ENCODE measurements at regions of chr7 and their contacts with region 1.

Region 1: DNA sequence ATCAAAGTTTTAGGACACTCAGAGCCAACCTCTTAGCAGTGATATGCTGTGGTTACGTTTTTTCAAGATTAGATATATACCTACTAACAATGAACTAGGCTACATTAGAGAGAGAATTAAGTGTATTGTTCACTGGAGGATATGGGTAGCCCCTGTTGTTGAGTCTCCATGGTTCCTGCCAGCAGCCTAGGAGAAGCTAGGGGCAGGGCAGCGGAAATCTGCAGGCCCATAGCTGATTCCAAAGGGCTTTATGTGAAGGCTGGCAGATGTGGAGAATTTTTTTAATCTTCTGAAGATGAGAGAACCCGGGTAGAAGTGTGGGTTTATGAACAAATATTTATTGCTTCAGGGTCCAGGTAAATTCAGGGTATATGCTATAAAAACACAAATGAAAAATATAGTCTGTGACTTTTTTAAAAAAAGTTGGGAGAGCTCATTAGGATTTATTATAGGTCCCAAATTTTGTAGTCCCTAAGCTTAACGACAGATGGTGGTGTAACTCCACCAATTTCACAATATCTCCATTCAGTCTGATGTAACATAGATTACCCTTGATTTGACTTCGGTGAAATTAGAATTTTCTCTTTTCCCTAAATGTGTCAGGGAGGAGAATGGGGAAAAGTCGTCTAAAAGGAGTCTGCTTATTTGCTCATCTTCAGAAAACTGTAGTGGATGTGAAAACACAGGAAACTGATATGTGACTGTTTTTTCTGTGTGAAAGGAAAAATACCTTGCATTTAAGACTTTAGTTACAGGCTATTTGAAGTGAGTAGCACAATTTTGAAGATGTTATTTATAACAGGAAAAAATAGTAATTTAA is 163.0 kb upstream of the PPP1R3A start:
- DNase-seq: peak; percentile 45
- H3K4me3 Mint-ChIP-seq: no peak overlapping the region
- H3K27ac Mint-ChIP-seq: no peak overlapping the region
- H3K4me1 Mint-ChIP-seq: peaks cover 6% of the 10 kb centered on the region
- H3K27me3 Mint-ChIP-seq: peaks cover 95% of the 10 kb centered on the region
- CTCF ChIP-seq: peak; percentile 62

Region 2: GRCh38 chr7:113752289-113752688 is 329.5 kb before region 1 on chr7:
- CTCF ChIA-PET with region 1: no interaction called
- POLR2A ChIA-PET with region 1: no interaction called
- intact Hi-C with region 1: no loop called
- DNase-seq: no peak
- H3K4me3 Mint-ChIP-seq: no peak overlapping the region
- H3K27ac Mint-ChIP-seq: no peak overlapping the region
- H3K4me1 Mint-ChIP-seq: no peaks in the 10 kb centered on the region
- H3K27me3 Mint-ChIP-seq: peaks cover 17% of the 10 kb centered on the region
- CTCF ChIP-seq: no peak

Region 3: DNA sequence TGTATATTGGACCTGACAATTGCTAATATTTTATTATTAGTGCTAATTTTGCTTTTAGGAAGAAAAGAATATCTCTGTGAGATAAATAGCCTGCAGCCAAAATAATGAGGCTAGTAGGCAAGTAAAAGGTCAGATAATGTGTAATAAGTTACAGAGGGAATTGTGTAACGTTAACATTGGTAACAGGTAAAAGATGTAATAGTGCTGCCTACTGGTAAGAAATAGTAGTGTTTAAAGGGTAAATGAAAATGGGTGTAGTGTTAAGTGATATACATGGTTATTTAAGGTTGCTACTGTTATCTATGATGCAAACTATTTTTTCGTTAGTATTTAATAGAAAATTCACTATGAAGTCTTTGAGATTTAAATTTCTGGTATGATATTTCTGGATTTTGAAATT is 323.6 kb after region 1 on chr7:
- CTCF ChIA-PET with region 1: interaction called, 3 read pairs
- POLR2A ChIA-PET with region 1: no interaction called
- intact Hi-C with region 1: loop called (anchors 1 kb)
- DNase-seq: peak; percentile 30
- H3K4me3 Mint-ChIP-seq: no peak overlapping the region
- H3K27ac Mint-ChIP-seq: no peak overlapping the region
- H3K4me1 Mint-ChIP-seq: no peaks in the 10 kb centered on the region
- H3K27me3 Mint-ChIP-seq: peaks cover 63% of the 10 kb centered on the region
- CTCF ChIP-seq: peak; percentile 36

Region 4: GRCh38 chr7:114539575-114539974 is 457.8 kb after region 1 on chr7:
- CTCF ChIA-PET with region 1: interaction called, 3 read pairs
- POLR2A ChIA-PET with region 1: no interaction called
- intact Hi-C with region 1: loop called (anchors 1 kb)
- DNase-seq: peak; percentile 27
- H3K4me3 Mint-ChIP-seq: no peak overlapping the region
- H3K27ac Mint-ChIP-seq: no peak overlapping the region
- H3K4me1 Mint-ChIP-seq: no peaks in the 10 kb centered on the region
- H3K27me3 Mint-ChIP-seq: peaks cover 68% of the 10 kb centered on the region
- CTCF ChIP-seq: no peak

Region 5: DNA sequence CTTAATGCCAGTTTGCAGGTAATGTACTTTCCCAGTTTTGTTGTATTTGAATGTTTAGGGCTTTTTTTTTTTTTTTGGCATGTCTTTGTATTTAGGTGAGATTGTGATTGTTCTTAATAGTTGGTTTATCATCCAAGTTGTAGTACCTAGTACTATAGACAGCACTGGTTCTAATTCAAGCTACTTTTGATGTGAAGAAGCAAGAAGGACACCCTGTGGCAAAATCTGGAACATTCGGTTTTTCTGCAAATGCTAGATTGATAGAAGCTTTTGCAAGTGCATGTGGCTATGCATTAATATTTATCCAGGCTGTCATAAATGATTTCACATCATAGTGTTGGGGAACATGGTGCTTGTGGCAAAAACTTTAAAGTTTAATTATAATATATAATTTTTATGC is 581.7 kb after region 1 on chr7:
- CTCF ChIA-PET with region 1: no interaction called
- POLR2A ChIA-PET with region 1: no interaction called
- intact Hi-C with region 1: loop called (anchors 5 kb)
- DNase-seq: peak; percentile 35
- H3K4me3 Mint-ChIP-seq: no peak overlapping the region
- H3K27ac Mint-ChIP-seq: no peak overlapping the region
- H3K4me1 Mint-ChIP-seq: no peaks in the 10 kb centered on the region
- H3K27me3 Mint-ChIP-seq: peaks cover 49% of the 10 kb centered on the region
- CTCF ChIP-seq: peak; percentile 18

Region 6: DNA sequence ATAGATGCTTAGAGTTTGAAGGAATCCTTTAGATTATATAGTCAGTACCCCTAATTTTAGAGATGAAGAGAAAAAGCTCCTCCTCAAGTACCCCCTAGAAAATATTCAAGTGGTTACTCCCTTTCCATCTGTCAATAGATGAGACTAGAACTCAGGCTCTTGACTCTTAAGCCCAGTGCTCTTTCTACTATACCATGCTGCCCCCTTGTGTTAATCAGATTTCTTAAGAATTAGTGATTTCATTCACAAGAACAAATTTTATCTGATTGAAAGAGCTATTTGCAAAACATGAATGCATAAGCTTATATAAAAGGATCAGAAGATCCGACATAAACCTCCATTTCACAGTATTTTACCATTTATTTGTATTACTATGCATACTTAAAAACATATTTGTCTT is 1769.5 kb after region 1 on chr7:
- CTCF ChIA-PET with region 1: interaction called, 4 read pairs
- POLR2A ChIA-PET with region 1: no interaction called
- intact Hi-C with region 1: loop called (anchors 1 kb)
- DNase-seq: peak; percentile 50
- H3K4me3 Mint-ChIP-seq: no peak overlapping the region
- H3K27ac Mint-ChIP-seq: no peak overlapping the region
- H3K4me1 Mint-ChIP-seq: no peaks in the 10 kb centered on the region
- H3K27me3 Mint-ChIP-seq: peaks cover 92% of the 10 kb centered on the region
- CTCF ChIP-seq: peak; percentile 35

Region 7: GRCh38 chr7:115910541-115911164 is 1828.8 kb after region 1 on chr7:
- CTCF ChIA-PET with region 1: interaction called, 5 read pairs
- POLR2A ChIA-PET with region 1: no interaction called
- intact Hi-C with region 1: loop called (anchors 2 kb)
- DNase-seq: peak; percentile 39
- H3K4me3 Mint-ChIP-seq: no peak overlapping the region
- H3K27ac Mint-ChIP-seq: no peak overlapping the region
- H3K4me1 Mint-ChIP-seq: no peaks in the 10 kb centered on the region
- H3K27me3 Mint-ChIP-seq: peaks cover 97% of the 10 kb centered on the region
- CTCF ChIP-seq: peak; percentile 54

Measured in MCF 10A (cell line).